Kidney (tissue), 22 donors: ENCODE measurements at regions of chr2 and their contacts with region 1.

Region 1: GRCh38 chr2:105521205-105521604 is 122.4 kb upstream of the FHL2 start:
- DNase-seq: peak in 2 of 5 donors; percentile 28 to 59
- H3K4me3 ChIP-seq: no peak overlapping the region
- H3K27ac ChIP-seq: no peak overlapping the region
- H3K4me1 ChIP-seq: peaks cover 0 to 9% (median 6%) of the 10 kb centered on the region in 3 donors
- H3K27me3 ChIP-seq: no peaks in the 10 kb centered on the region
- CTCF ChIP-seq: peak; percentile 33

Region 2: DNA sequence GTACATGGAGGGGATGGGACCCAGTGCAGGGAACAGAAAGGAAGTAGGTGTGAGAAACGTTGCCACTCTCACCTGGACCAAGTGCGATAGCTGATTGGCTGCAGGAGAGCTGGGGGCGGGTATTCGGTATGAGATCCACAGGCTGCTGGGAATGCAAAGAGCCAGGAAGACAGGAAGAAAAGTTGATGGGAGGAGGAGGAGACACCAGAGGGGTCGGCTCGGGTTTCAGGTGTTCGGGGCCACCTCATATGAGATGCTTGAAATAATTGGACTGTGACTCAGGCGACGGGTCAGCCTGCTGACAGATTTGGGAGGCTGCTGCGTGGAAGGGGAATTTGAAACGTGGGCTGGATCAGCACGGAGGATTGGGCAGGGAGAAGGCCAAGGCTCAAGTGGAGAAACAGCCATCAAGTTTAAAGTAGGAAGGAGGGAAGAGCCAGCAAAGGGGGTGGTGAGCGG is 418.2 kb before region 1 on chr2:
- intact Hi-C with region 1: no loop called
- DNase-seq: peak in 4 of 5 donors; percentile 82 to 87 (median 84)
- H3K4me3 ChIP-seq: no peak overlapping the region
- H3K27ac ChIP-seq: no peak overlapping the region
- H3K4me1 ChIP-seq: no peaks in the 10 kb centered on the region
- H3K27me3 ChIP-seq: no peaks in the 10 kb centered on the region
- CTCF ChIP-seq: no peak

Region 3: GRCh38 chr2:105369747-105370690 is 151.2 kb before region 1 on chr2:
- intact Hi-C with region 1: loop called (anchors 5 kb)
- DNase-seq: peak; percentile 90 to 94 (median 91)
- H3K4me3 ChIP-seq: no peak overlapping the region
- H3K27ac ChIP-seq: no peak overlapping the region
- H3K4me1 ChIP-seq: peaks cover 0 to 6% (median 0%) of the 10 kb centered on the region in 3 donors
- H3K27me3 ChIP-seq: no peaks in the 10 kb centered on the region
- CTCF ChIP-seq: peak; percentile 95

Region 4: DNA sequence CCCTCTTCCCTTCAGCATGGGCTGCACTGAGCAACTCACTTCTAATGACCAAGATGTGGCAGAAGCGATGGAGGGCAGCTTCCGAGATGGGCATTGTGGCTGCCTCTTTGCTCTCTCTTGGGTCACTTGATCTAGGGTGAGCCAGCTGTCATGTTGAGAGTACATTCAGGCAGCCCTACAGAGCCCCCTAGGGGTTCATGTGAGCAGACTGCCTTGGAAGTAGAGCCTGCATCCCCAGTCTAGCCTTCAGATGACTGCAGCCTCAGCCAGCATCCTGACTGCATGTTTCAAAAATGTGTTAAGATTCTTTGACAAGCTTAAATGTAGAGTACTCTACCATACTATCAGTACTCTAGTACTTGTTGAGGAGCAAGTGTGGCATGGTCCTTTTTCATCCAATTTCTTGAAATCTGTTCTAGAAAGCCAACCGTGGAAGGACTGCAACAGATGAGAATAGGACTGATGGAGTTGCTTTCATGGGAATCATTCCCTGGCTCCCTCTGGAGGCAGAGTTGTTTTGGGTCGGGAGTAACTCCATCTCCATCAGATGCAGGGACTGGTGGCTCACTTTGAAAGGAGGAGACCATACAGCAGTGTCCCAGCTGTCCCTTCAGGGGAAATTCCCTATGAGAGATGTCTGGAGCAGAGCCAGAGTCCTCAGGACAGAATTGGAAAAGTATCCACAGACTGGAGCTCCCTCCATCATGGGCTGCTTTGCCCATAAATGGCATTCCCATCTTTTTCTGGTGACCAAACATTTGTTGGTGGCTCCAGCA is 367.6 kb after region 1 on chr2:
- intact Hi-C with region 1: no loop called
- DNase-seq: no peak
- H3K4me3 ChIP-seq: no peak overlapping the region
- H3K27ac ChIP-seq: no peak overlapping the region
- H3K4me1 ChIP-seq: peaks cover 0 to 31% (median 29%) of the 10 kb centered on the region in 3 donors
- H3K27me3 ChIP-seq: no peaks in the 10 kb centered on the region
- CTCF ChIP-seq: no peak